GM23248 (cell line): ENCODE measurements at regions of chr1 and their contacts with region 1.

Region 1: DNA sequence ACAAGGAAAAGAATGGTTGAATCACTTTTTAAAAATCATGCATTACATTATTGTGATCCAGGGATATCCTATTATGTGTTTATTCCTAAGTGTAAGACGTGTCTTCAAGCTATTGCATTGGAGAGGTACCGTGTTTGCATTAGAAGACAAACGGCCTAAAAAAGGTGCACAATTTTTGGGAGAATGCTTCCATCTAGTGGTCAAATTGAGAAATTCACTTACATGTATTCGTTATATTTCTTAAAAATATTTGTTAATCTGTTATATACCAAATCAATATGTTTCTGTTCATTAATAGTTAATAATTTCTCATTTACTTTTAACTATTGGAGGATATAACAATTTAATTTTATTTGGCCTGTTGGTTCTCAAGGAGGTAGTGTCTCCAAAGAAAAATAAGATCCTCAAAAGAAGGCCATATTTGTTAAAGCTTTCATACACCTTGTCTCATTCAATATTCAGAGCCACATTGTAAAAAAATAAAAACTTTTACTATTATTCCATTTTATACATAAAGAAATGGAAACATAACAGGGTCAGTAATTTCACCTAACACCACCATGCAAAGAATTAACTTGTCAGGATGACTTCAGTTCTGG is 40.5 kb upstream of the KCTD3 start:
- DNase-seq: peak; percentile 62
- H3K4me3 ChIP-seq: no peak overlapping the region
- H3K27ac ChIP-seq: no peak overlapping the region
- H3K4me1 ChIP-seq: peaks cover 13% of the 10 kb centered on the region
- H3K27me3 ChIP-seq: no peaks in the 10 kb centered on the region

Region 2: GRCh38 chr1:214224611-214225354 is 1301.9 kb before region 1 on chr1:
- in situ Hi-C with region 1: loop called (anchors 25 kb)
- DNase-seq: peak; percentile 74
- H3K4me3 ChIP-seq: peak overlapping the region; percentile 78
- H3K27ac ChIP-seq: peak overlapping the region; percentile 64
- H3K4me1 ChIP-seq: 0 out of 2 replicates have a peak, but pooled peaks cover 6% of the 10 kb centered on the region
- H3K27me3 ChIP-seq: no peaks in the 10 kb centered on the region

Region 3: GRCh38 chr1:214328770-214329469 is 1197.7 kb before region 1 on chr1:
- in situ Hi-C with region 1: loop called (anchors 25 kb)
- DNase-seq: peak; percentile 92
- H3K4me3 ChIP-seq: no peak overlapping the region
- H3K27ac ChIP-seq: no peak overlapping the region
- H3K4me1 ChIP-seq: peaks cover 3% of the 10 kb centered on the region; the same call in 1 of the 2 replicates
- H3K27me3 ChIP-seq: no peaks in the 10 kb centered on the region

Region 4: DNA sequence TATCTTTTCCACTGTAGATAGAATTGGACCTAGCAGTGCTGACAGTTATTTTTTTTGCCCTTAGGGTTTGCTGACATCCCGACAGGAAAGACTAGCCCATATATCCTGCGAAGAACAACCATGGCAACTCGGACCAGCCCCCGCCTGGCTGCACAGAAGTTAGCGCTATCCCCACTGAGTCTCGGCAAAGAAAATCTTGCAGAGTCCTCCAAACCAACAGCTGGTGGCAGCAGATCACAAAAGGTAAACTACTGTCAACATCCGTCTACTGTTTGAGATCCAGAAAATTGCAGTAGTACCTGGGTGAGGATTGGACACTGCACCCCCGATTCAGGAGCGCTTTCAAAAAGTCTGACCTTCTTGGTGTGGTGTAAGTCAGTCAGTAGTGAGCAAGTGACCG is 867.9 kb before region 1 on chr1:
- in situ Hi-C with region 1: loop called (anchors 5 kb)
- DNase-seq: peak; percentile 78
- H3K4me3 ChIP-seq: no peak overlapping the region
- H3K27ac ChIP-seq: no peak overlapping the region
- H3K4me1 ChIP-seq: peaks cover 18% of the 10 kb centered on the region
- H3K27me3 ChIP-seq: no peaks in the 10 kb centered on the region